GM12878 (cell line): ENCODE measurements at regions of chr2 and their contacts with region 1.

Region 1: DNA sequence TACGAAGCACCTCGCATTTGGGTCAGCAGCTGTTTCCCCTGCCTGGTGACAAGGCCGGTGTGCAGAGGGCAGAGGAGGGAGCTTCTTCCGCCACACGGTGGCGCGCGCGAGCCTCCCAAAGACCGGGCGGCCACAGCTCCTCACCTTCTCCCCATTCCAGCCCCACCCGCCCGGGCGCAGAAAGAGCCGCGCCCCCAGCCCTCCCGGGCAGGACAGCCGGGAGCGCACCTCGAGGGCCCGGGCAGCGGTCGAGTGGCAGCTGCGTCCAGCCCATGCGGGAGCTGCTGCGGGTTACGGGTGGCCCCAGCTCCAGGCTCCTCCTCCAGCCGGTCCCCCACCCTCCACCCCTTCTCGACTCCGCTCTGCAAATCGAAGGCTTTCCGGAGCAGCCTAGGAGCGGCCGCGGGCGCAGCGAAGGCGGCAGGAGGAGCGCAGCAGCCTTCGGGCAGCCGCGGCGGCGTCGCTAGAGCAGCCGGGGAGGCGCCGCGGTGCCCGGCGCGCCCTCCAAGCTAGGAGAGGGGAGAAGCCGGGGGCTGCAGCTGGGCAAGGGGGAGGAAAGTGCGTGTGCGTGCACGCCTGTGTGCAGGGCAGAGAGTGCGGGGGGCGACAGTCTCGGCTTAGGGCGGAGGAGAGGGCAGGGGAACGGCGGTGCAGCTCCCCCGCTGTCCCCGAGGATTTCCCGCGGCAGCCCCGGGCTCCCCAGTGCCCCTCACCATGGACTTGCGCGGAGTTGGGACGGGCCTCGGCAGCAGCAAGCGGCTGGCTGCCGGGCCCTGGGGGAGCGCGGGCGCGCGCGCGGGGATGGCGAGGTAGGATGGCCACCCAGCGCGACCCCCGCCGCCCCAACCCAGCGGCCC is at the start of gene CCDC85A:
- DNase-seq: no peak
- ATAC-seq: peak; percentile 99
- H3K4me3 ChIP-seq: peak within 1 kb of the TSS; percentile 17; the same call in 1 of the 2 replicates
- H3K27ac ChIP-seq: no peak within 1 kb of the TSS
- H3K4me1 ChIP-seq: no peaks in the 10 kb centered on the region
- H3K27me3 ChIP-seq: peaks cover 6 to 7% of the 10 kb centered on the region in 2 experiments
- CTCF ChIP-seq: peak; percentile 75 to 93 (median 88)
- EP300 ChIP-seq: no peak
- POLR2A ChIP-seq: no peak
- RAD21 ChIP-seq: peak; percentile 68
- polyA plus RNA-seq, gene CCDC85A: 0.02 to 0.04 TPM

Region 2: DNA sequence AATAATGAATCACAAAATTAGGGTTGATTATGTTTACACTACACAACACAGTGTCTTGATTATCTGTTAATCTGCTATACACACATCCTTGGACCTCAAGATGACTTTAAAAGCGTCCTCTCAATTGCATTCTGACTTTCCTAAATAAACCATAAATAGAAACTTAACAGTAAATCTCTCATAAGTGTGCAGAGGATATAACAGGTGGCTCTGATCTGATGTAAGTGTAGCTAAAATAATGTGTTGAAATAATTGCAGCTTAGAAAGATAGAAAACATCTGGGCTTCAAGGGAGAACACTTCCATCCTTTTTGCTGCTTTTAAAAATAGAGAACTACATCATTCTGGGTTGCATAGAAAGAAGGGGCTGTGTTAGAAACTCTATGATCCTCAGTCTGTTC is 181.9 kb before region 1 on chr2:
- CTCF ChIA-PET with region 1: no interaction called
- POLR2A ChIA-PET with region 1: no interaction called
- RAD21 ChIA-PET with region 1: no interaction called
- SMC1A ChIA-PET with region 1: no interaction called
- in situ Hi-C with region 1: no loop called
- intact Hi-C with region 1: no loop called
- DNase-seq: no peak
- ATAC-seq: no peak
- H3K4me3 ChIP-seq: no peak overlapping the region
- H3K27ac ChIP-seq: no peak overlapping the region
- H3K4me1 ChIP-seq: no peaks in the 10 kb centered on the region
- H3K27me3 ChIP-seq: no peaks in the 10 kb centered on the region; a peak in 1 of 4 replicates
- CTCF ChIP-seq: no peak
- EP300 ChIP-seq: no peak
- POLR2A ChIP-seq: no peak
- RAD21 ChIP-seq: no peak

Region 3: GRCh38 chr2:56202381-56203121 is 18.7 kb after region 1 on chr2:
- CTCF ChIA-PET with region 1: interaction called, 13 read pairs
- POLR2A ChIA-PET with region 1: no interaction called
- RAD21 ChIA-PET with region 1: interaction called, 4 read pairs
- SMC1A ChIA-PET with region 1: interaction called, 4 read pairs
- in situ Hi-C with region 1: no loop called
- intact Hi-C with region 1: no loop called
- DNase-seq: no peak
- ATAC-seq: no peak
- H3K4me3 ChIP-seq: no peak overlapping the region
- H3K27ac ChIP-seq: no peak overlapping the region
- H3K4me1 ChIP-seq: no peaks in the 10 kb centered on the region
- H3K27me3 ChIP-seq: no peaks in the 10 kb centered on the region
- CTCF ChIP-seq: no peak
- EP300 ChIP-seq: no peak
- POLR2A ChIP-seq: no peak
- RAD21 ChIP-seq: no peak

Region 4: DNA sequence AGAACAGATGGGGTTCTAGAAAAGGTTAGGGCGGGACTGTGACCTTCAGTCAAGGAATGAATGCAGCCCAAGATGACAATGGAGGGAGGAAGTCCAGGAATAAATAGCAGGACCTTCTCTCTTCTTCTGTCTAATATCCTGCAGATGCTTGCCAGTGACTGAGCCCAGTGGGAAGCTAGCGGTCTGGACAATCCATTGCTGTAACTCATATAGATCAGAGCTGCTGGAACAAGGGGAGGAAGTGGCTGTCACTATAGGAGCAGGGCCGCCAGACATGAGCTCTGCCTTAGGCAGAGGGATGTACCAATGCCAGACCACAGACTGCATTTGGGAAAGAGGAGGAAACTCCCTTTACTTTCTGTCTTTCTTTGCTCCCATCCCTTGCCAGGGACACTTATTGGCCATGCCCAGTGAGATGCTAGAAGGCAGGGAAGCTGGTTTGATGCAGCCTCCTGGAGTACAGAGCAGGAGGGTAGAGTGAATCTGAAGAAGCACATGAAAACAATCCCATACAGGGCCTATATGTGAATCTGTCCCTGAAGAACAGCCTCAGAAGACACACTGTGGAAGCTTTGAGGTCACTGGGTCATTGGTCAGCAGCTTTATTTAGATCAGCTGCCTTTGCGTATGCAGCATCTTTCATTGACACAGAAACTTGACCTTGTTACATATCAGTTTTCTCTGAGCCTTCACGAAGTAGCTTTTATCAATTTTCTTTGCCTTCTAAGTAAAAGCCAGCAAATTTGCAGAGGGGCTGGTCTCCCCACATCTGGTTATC is 65.3 kb after region 1 on chr2:
- CTCF ChIA-PET with region 1: no interaction called
- POLR2A ChIA-PET with region 1: no interaction called
- RAD21 ChIA-PET with region 1: no interaction called
- SMC1A ChIA-PET with region 1: no interaction called
- in situ Hi-C with region 1: no loop called
- intact Hi-C with region 1: no loop called
- DNase-seq: no peak
- ATAC-seq: no peak
- H3K4me3 ChIP-seq: no peak overlapping the region
- H3K27ac ChIP-seq: no peak overlapping the region
- H3K4me1 ChIP-seq: no peaks in the 10 kb centered on the region
- H3K27me3 ChIP-seq: no peaks in the 10 kb centered on the region; a peak in 1 of 4 replicates
- CTCF ChIP-seq: no peak
- EP300 ChIP-seq: no peak
- POLR2A ChIP-seq: no peak
- RAD21 ChIP-seq: no peak

Region 5: DNA sequence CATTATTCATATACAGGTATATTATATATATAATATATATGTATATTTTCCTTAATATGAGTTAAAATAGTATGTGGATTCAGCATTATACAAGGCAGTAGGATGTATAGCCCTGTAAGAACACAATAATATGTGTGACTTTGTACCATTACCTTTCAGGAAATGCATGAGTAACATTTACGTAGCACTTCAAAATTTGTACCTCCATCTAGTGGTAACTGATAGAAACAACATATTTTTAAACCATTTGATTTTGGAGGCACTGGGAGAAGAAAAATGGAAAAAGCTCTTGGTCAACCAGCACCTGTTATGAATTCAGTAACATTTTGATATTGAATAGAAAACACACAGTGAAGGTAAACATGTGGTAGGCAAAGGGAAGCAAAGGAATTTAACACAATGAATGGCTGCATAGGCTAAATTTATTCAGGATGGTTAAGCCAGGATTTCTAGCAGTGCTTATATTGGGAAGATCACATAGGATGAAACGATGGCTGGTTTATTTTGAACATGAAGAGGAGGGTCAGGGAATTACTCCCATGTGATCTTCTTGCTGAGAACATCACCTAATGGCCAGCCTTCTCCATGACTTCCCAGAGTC is 565.4 kb after region 1 on chr2:
- CTCF ChIA-PET with region 1: interaction called, 28 read pairs
- POLR2A ChIA-PET with region 1: no interaction called
- RAD21 ChIA-PET with region 1: interaction called, 18 read pairs
- SMC1A ChIA-PET with region 1: interaction called, 7 read pairs
- in situ Hi-C with region 1: loop called (anchors 5 kb)
- intact Hi-C with region 1: loop called (anchors 1 kb)
- DNase-seq: no peak
- ATAC-seq: peak; percentile 56; the same call in 2 of the 3 replicates
- H3K4me3 ChIP-seq: no peak overlapping the region
- H3K27ac ChIP-seq: no peak overlapping the region
- H3K4me1 ChIP-seq: no peaks in the 10 kb centered on the region
- H3K27me3 ChIP-seq: no peaks in the 10 kb centered on the region
- CTCF ChIP-seq: peak; percentile 30 to 62 (median 33); a peak in 4 of 6 replicates
- EP300 ChIP-seq: no peak
- POLR2A ChIP-seq: no peak
- RAD21 ChIP-seq: peak; percentile 66

Region 6: GRCh38 chr2:57509189-57509588 is 1325.3 kb after region 1 on chr2:
- CTCF ChIA-PET with region 1: interaction called, 6 read pairs
- POLR2A ChIA-PET with region 1: no interaction called
- RAD21 ChIA-PET with region 1: no interaction called
- SMC1A ChIA-PET with region 1: no interaction called
- in situ Hi-C with region 1: loop called (anchors 10 kb)
- intact Hi-C with region 1: no loop called
- DNase-seq: no peak
- ATAC-seq: no peak
- H3K4me3 ChIP-seq: no peak overlapping the region
- H3K27ac ChIP-seq: no peak overlapping the region
- H3K4me1 ChIP-seq: no peaks in the 10 kb centered on the region
- H3K27me3 ChIP-seq: no peaks in the 10 kb centered on the region
- CTCF ChIP-seq: no peak
- EP300 ChIP-seq: no peak
- POLR2A ChIP-seq: no peak
- RAD21 ChIP-seq: no peak